ENCODE measurements at regions of chr19 and their contacts with region 1.

Region 1: GRCh38 chr19:10717356-10718204 is at the start of gene DNM2:
- DNase-seq: peak; percentile 98
- H3K4me3 Mint-ChIP-seq: peak within 1 kb of the TSS; percentile 99
- H3K27ac Mint-ChIP-seq: peak within 1 kb of the TSS; percentile 86
- H3K4me1 Mint-ChIP-seq: peaks cover 34% of the 10 kb centered on the region
- H3K27me3 Mint-ChIP-seq: no peaks in the 10 kb centered on the region
- total RNA-seq, gene DNM2: 277 to 288 TPM

Region 2: GRCh38 chr19:10677751-10678150 is 39.8 kb before region 1 on chr19:
- CTCF ChIA-PET with region 1: no interaction called
- POLR2A ChIA-PET with region 1: no interaction called
- DNase-seq: no peak
- H3K4me3 Mint-ChIP-seq: no peak overlapping the region
- H3K27ac Mint-ChIP-seq: no peak overlapping the region
- H3K4me1 Mint-ChIP-seq: no peaks in the 10 kb centered on the region
- H3K27me3 Mint-ChIP-seq: no peaks in the 10 kb centered on the region

Region 3: GRCh38 chr19:10730923-10731322 is 13.3 kb after region 1 on chr19:
- CTCF ChIA-PET with region 1: interaction called, 16 read pairs
- POLR2A ChIA-PET with region 1: interaction called, 12 read pairs
- DNase-seq: no peak
- H3K4me3 Mint-ChIP-seq: no peak overlapping the region
- H3K27ac Mint-ChIP-seq: peak overlapping the region; percentile 82
- H3K4me1 Mint-ChIP-seq: peaks cover 52% of the 10 kb centered on the region
- H3K27me3 Mint-ChIP-seq: no peaks in the 10 kb centered on the region

Region 4: DNA sequence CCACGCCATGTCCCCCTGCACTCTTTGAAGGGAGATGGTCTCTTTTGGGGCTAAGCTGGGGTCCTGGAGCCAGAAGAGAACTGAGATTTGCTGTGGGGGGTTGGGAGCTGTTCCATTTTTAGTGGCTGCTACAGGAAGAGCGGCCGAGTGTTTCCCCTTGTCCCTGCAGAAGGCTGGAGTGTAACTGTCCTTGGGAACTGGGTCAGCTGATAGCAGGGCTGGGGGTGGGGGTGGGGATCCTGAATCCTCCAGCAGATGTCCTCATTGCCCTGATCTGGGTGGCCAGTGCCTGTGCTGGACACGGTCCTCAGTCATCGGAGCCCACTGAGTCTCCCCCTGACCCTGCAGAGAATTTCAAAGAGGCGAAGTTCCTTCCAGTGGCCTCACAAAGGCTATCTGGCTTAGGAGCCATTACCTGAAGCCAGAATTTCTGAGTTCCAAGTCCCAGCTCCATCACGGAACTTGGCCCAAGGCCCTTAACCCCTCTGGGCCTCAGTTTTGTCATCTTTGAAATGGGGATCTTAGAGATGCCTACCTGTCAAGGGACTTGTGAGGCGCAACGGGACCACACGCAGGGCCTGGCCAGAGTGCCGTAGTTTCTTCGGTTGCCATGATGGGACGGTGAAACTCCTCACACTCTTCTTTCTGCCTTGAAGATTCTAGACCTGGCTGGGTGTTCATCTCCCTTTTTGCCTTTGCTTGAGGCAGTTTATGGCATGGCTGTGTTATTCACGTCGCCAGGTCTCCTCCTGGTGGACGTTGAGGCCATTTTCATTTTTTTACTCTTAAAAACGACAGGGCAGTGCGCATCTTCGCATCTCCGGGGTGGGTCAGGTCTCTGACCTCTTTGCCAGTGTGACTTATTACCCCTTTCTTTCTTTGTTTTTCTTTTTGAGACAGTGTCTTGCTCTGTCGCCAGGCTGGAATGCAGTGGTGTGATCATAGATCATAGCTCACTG is 52.2 kb after region 1 on chr19:
- CTCF ChIA-PET with region 1: interaction called, 57 read pairs
- POLR2A ChIA-PET with region 1: interaction called, 6 read pairs
- DNase-seq: no peak
- H3K4me3 Mint-ChIP-seq: no peak overlapping the region
- H3K27ac Mint-ChIP-seq: peak overlapping the region; percentile 7
- H3K4me1 Mint-ChIP-seq: peaks cover 48% of the 10 kb centered on the region
- H3K27me3 Mint-ChIP-seq: no peaks in the 10 kb centered on the region

Region 5: DNA sequence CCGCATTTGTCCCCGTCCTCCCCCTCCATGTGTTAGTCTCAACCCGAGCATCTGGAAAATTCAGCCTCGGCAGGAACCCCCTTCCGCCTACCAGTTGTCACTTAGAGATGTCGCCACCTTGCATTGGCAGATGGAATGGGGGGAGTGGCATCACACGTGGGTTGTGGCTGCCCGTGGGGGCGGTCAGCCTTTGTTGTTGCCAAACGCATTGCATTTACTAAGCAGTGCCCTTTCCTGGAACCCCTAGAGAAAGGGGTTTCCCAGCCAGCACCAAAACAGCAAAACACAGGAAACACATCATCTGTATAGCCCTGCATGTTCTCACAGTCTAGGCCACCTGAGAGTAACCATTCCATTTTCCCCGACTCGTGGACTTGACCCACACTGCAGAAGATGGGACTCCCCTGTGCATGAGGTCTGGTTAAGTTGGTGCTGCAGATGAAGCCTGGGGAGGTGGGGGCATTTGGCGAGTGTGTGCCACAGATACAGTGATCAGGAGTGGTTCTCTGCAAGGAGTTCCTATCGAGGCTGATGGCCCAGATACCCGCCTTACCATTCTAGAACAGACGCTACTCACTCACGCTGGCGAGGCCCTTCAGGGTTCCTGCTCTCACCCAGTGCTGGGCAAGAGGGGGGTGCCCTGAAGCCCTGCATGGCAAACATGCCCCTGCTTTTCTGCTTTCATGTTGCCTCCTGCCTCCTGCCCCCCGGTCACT is 80.1 kb after region 1 on chr19:
- CTCF ChIA-PET with region 1: interaction called, 18 read pairs
- POLR2A ChIA-PET with region 1: interaction called, 4 read pairs
- DNase-seq: peak; percentile 92
- H3K4me3 Mint-ChIP-seq: peak overlapping the region; percentile 61
- H3K27ac Mint-ChIP-seq: peak overlapping the region; percentile 86
- H3K4me1 Mint-ChIP-seq: peaks cover 61% of the 10 kb centered on the region
- H3K27me3 Mint-ChIP-seq: no peaks in the 10 kb centered on the region

Region 6: GRCh38 chr19:10835754-10836477 is 118.3 kb after region 1 on chr19 and contains the start of gene TMED1:
- CTCF ChIA-PET with region 1: interaction called, 19 read pairs
- POLR2A ChIA-PET with region 1: interaction called, 22 read pairs
- DNase-seq: peak; percentile 98
- H3K4me3 Mint-ChIP-seq: peak within 1 kb of the TSS; percentile 86
- H3K27ac Mint-ChIP-seq: peak within 1 kb of the TSS; percentile 93
- H3K4me1 Mint-ChIP-seq: peaks cover 16% of the 10 kb centered on the region
- H3K27me3 Mint-ChIP-seq: peaks cover 4% of the 10 kb centered on the region
- total RNA-seq, gene TMED1: 15.7 to 17.3 TPM

Region 7: GRCh38 chr19:10864538-10864899 is 146.9 kb after region 1 on chr19:
- CTCF ChIA-PET with region 1: interaction called, 138 read pairs
- POLR2A ChIA-PET with region 1: interaction called, 12 read pairs
- DNase-seq: peak; percentile 85
- H3K4me3 Mint-ChIP-seq: no peak overlapping the region
- H3K27ac Mint-ChIP-seq: no peak overlapping the region
- H3K4me1 Mint-ChIP-seq: peaks cover 30% of the 10 kb centered on the region
- H3K27me3 Mint-ChIP-seq: no peaks in the 10 kb centered on the region

Measured in activated CD4-positive, alpha-beta memory T cell treated with anti-CD3 and anti-CD28 coated beads, Interleukin-2, amount 10 ng/mL, durations not matched to agents 7 days and 5 days (primary cell).